ENCODE measurements at regions of chr6 and their contacts with region 1.

Region 1: GRCh38 chr6:30719791-30720737 is at the start of gene TUBB:
- DNase-seq: peak; percentile 96 to 97
- H3K4me3 ChIP-seq: peak within 1 kb of the TSS; percentile 59 to 69
- H3K27ac ChIP-seq: peak within 1 kb of the TSS; percentile 91 to 97
- H3K4me1 ChIP-seq: no peaks in the 10 kb centered on the region
- H3K27me3 ChIP-seq: no peaks in the 10 kb centered on the region
- CTCF ChIP-seq: peak in 2 of 4 experiments; percentile 8 to 43
- POLR2A ChIP-seq: peak; percentile 83 to 93
- total RNA-seq, gene TUBB: 130 to 426 (median 290) TPM

Region 2: GRCh38 chr6:30678964-30679726 is 40.9 kb before region 1 on chr6:
- intact Hi-C with region 1: loop called (anchors 2 kb)
- DNase-seq: peak; percentile 83 to 88
- H3K4me3 ChIP-seq: peak overlapping the region in 1 of 2 donors; percentile 25
- H3K27ac ChIP-seq: peak overlapping the region; percentile 98 to 99
- H3K4me1 ChIP-seq: peaks cover 0 to 27% of the 10 kb centered on the region in 2 donors
- H3K27me3 ChIP-seq: no peaks in the 10 kb centered on the region
- CTCF ChIP-seq: peak; percentile 97 to 98 (median 98)
- POLR2A ChIP-seq: no peak

Region 3: GRCh38 chr6:30686908-30687658 is 33.0 kb before region 1 on chr6:
- intact Hi-C with region 1: loop called (anchors 2 kb)
- DNase-seq: peak; percentile 97
- H3K4me3 ChIP-seq: peak overlapping the region; percentile 79 to 99
- H3K27ac ChIP-seq: peak overlapping the region; percentile 98 to 99
- H3K4me1 ChIP-seq: peaks cover 8 to 20% of the 10 kb centered on the region in 2 donors
- H3K27me3 ChIP-seq: no peaks in the 10 kb centered on the region
- CTCF ChIP-seq: no peak
- POLR2A ChIP-seq: peak; percentile 23 to 59

Measured in uterus (tissue), 4 donors.